ENCODE measurements at regions of chr12 and their contacts with region 1.

Region 1: DNA sequence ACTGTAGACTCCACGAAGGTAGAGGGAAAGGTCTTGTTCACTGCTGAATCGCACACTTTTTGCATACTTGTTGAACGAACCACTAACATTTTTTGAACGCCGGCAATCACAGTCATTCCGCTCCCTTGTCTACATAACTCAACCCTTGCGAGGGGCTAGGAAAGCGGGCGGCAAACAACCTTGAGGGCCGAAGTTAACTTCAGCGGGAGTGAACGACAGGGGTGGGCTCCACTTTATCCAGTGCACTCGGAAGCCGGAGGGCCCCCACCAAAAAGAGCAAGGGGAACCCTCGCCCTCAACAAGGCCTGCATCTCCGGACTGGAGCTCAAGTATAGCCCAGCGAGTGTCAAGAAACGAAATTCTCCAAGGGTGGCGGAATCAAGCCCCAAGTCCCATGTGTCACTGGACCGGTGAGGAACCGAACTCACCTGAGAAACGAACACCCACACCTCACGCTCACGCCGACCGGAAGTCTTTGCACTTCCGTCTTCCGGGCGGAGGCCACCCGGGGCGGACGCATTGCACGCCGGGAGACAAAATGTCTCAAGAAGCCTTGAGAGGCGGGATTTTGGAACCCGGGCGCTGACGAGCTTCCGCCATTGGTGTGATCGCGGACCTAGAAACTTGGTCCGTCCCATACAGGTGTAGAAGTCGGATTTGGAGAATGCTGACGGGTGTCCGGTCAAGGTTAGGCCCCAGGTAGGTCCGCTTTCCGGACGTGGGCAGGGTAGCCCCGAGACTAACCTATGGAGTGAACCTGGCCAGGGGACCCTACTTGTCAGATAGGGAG is at the start of gene LLPH:
- H3K4me3 Mint-ChIP-seq: peak within 1 kb of the TSS; percentile 77
- H3K27ac Mint-ChIP-seq: peak within 1 kb of the TSS; percentile 89
- H3K4me1 Mint-ChIP-seq: peaks cover 29% of the 10 kb centered on the region
- H3K27me3 Mint-ChIP-seq: no peaks in the 10 kb centered on the region

Region 2: GRCh38 chr12:65986047-65986446 is 144.4 kb before region 1 on chr12:
- intact Hi-C with region 1: no loop called
- H3K4me3 Mint-ChIP-seq: no peak overlapping the region
- H3K27ac Mint-ChIP-seq: no peak overlapping the region
- H3K4me1 Mint-ChIP-seq: no peaks in the 10 kb centered on the region
- H3K27me3 Mint-ChIP-seq: no peaks in the 10 kb centered on the region

Region 3: GRCh38 chr12:66119870-66120241 is 10.6 kb before region 1 on chr12:
- intact Hi-C with region 1: no loop called
- H3K4me3 Mint-ChIP-seq: no peak overlapping the region
- H3K27ac Mint-ChIP-seq: no peak overlapping the region
- H3K4me1 Mint-ChIP-seq: peaks cover 6% of the 10 kb centered on the region
- H3K27me3 Mint-ChIP-seq: no peaks in the 10 kb centered on the region

Region 4: GRCh38 chr12:66235626-66236281 is 105.3 kb after region 1 on chr12:
- intact Hi-C with region 1: loop called (anchors 5 kb)
- H3K4me3 Mint-ChIP-seq: peak overlapping the region; percentile 72
- H3K27ac Mint-ChIP-seq: peak overlapping the region; percentile 85
- H3K4me1 Mint-ChIP-seq: peaks cover 66% of the 10 kb centered on the region
- H3K27me3 Mint-ChIP-seq: no peaks in the 10 kb centered on the region

Region 5: GRCh38 chr12:66453844-66454243 is 323.4 kb after region 1 on chr12:
- intact Hi-C with region 1: no loop called
- H3K4me3 Mint-ChIP-seq: no peak overlapping the region
- H3K27ac Mint-ChIP-seq: no peak overlapping the region
- H3K4me1 Mint-ChIP-seq: no peaks in the 10 kb centered on the region
- H3K27me3 Mint-ChIP-seq: peaks cover 2% of the 10 kb centered on the region